CD8-positive, alpha-beta memory T cell (primary cell): ENCODE measurements at regions of chr4 and their contacts with region 1.

Region 1: DNA sequence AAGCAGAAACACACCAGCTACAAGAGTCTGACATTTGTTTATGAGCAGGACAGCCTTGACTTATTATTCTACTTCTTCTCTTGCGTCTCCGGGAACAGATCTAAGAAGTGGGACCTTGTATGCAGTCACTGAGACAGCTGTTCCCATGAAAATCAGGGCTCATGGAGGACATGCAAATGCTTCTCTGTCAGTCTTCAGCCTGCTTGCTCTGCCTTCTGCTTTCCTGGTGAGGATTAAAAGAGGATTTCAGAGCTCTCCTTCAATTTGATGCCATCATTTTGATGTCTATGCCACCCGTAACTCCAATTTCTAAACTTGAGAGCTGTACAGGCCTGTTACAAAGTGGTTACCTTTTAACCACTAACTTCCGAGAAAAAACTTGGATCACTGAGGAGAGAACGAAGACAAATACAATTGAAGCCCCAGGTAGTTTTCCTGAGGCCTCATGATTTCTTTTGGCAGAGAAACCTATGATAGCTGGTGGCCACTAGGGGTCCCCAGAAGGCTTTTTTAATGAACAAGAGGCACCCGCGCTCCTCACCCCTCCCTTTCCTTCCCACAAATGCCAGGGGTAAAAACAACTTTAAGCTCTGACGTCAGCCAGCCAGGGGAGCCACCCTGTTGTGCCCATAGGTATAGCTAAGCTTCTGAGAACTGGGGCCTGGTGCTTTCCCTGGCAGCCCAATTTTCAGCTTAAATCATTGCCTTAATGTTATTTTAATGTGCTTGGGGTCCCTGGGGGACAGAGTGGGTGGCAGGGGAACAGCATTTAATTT is 97.0 kb downstream of the DDIT4L start:
- DNase-seq: peak; percentile 74 to 93 (median 88)
- H3K4me3 ChIP-seq: no peak overlapping the region
- H3K4me3 Mint-ChIP-seq: peak overlapping the region in 4 of 7 donors; percentile 10 to 55 (median 27)
- H3K27ac ChIP-seq: no peak overlapping the region
- H3K27ac Mint-ChIP-seq: peak overlapping the region; percentile 57 to 96 (median 94)
- H3K4me1 ChIP-seq: peaks cover 10% of the 10 kb centered on the region
- H3K4me1 Mint-ChIP-seq: peaks cover 20 to 34% (median 23%) of the 10 kb centered on the region in 3 donors
- H3K27me3 ChIP-seq: no peaks in the 10 kb centered on the region
- H3K27me3 Mint-ChIP-seq: peaks cover 0 to 3% of the 10 kb centered on the region in 2 donors

Region 2: DNA sequence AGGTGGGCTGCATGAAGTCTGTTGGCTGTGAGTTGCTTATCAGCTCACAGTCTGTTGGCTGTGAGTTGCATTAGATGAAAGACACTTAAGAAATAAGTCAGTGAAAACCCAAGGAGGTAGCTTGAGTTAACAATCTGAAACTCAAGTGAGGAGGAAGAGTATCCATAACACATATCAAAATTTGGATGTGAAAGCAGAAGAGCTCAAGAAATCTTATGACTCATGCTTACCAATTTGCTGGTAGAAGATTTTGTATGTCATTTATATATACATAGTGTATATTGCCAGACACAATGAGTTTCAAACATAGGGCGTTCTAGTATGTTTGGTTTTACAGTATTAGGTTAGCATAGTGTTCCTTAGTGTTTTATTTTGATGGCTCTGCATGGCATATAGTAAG is 10.4 kb before region 1 on chr4:
- CTCF ChIA-PET with region 1: interaction called, 15 read pairs
- POLR2A ChIA-PET with region 1: no interaction called
- DNase-seq: no peak
- H3K4me3 ChIP-seq: no peak overlapping the region
- H3K4me3 Mint-ChIP-seq: no peak overlapping the region
- H3K27ac ChIP-seq: no peak overlapping the region
- H3K27ac Mint-ChIP-seq: no peak overlapping the region
- H3K4me1 ChIP-seq: no peaks in the 10 kb centered on the region
- H3K4me1 Mint-ChIP-seq: peaks cover 8 to 14% (median 10%) of the 10 kb centered on the region in 3 donors
- H3K27me3 ChIP-seq: no peaks in the 10 kb centered on the region
- H3K27me3 Mint-ChIP-seq: peaks cover 0 to 2% of the 10 kb centered on the region in 2 donors

Region 3: DNA sequence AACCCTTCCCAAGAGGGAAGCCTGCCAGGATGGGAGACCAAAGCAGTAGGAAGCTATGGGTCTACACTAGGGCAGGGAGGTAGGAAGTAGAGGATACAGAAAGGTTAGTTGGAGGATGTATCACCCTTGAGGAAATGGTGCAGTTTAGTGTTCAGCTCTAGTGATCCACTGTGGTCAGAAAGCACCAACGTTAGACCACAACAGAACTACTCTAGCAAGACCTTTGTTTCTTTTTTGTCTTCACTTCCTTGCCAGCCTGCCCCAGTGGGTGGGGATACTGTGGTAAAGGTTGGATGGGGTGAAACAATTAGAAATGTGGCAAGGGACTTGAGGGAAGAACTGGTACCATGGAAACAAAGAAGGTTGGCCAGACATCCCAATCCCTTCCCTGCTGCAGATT is 13.7 kb after region 1 on chr4:
- CTCF ChIA-PET with region 1: interaction called, 28 read pairs
- POLR2A ChIA-PET with region 1: no interaction called
- DNase-seq: peak in 3 of 5 donors; percentile 49 to 56 (median 54)
- H3K4me3 ChIP-seq: no peak overlapping the region
- H3K4me3 Mint-ChIP-seq: peak overlapping the region in 5 of 7 donors; percentile 2 to 74 (median 16)
- H3K27ac ChIP-seq: no peak overlapping the region
- H3K27ac Mint-ChIP-seq: peak overlapping the region in 7 of 8 donors; percentile 42 to 80 (median 67)
- H3K4me1 ChIP-seq: peaks cover 10% of the 10 kb centered on the region
- H3K4me1 Mint-ChIP-seq: peaks cover 15 to 27% (median 19%) of the 10 kb centered on the region in 3 donors
- H3K27me3 ChIP-seq: no peaks in the 10 kb centered on the region
- H3K27me3 Mint-ChIP-seq: no peaks in the 10 kb centered on the region

Region 4: GRCh38 chr4:100248476-100248875 is 155.2 kb after region 1 on chr4:
- CTCF ChIA-PET with region 1: no interaction called
- POLR2A ChIA-PET with region 1: no interaction called
- DNase-seq: no peak
- H3K4me3 ChIP-seq: no peak overlapping the region
- H3K4me3 Mint-ChIP-seq: no peak overlapping the region
- H3K27ac ChIP-seq: no peak overlapping the region
- H3K27ac Mint-ChIP-seq: no peak overlapping the region
- H3K4me1 ChIP-seq: no peaks in the 10 kb centered on the region
- H3K4me1 Mint-ChIP-seq: no peaks in the 10 kb centered on the region
- H3K27me3 ChIP-seq: no peaks in the 10 kb centered on the region
- H3K27me3 Mint-ChIP-seq: no peaks in the 10 kb centered on the region

Region 5: GRCh38 chr4:100261346-100261745 is 168.1 kb after region 1 on chr4:
- CTCF ChIA-PET with region 1: no interaction called
- POLR2A ChIA-PET with region 1: no interaction called
- DNase-seq: no peak
- H3K4me3 ChIP-seq: no peak overlapping the region
- H3K4me3 Mint-ChIP-seq: no peak overlapping the region
- H3K27ac ChIP-seq: no peak overlapping the region
- H3K27ac Mint-ChIP-seq: no peak overlapping the region
- H3K4me1 ChIP-seq: no peaks in the 10 kb centered on the region
- H3K4me1 Mint-ChIP-seq: no peaks in the 10 kb centered on the region
- H3K27me3 ChIP-seq: no peaks in the 10 kb centered on the region
- H3K27me3 Mint-ChIP-seq: peaks cover 3 to 9% of the 10 kb centered on the region in 2 donors

Region 6: DNA sequence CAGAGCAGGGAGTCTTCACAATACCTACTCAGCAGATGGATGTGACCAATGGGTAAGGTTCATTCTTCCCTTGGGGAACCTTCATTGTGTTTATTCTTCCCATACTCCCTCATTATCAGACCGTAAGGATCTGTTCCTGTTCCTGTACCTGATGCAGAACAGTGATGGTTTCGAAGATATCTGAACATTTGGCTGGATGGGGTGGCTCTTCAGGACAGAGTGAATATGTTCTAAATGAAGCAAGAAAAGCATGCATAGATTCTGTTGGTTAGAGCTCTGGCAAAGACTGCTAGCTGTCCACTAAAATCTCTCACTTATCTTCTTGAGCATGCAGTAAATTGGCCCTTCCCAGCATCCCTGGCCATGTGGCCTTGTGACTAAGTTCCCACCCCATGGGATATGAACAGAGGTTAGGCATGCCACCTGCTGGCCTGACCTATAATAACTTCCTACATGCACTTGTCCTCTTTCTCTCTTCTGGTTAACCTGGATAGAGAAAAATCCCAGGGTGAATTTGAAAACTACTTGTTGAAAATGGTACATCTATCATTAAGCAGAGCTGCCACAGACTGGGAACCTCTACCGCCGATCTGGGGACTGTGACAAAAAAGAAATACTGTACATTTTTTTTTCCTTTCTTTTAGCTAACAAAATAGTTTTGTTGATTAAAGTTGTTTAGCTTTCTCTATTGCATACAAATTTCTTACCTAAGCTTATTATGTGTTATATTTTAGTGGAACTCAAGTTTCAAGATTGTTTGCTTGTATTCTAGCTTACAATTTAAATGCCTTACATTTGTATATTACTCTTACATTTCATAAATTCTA is 1637.2 kb after region 1 on chr4:
- CTCF ChIA-PET with region 1: interaction called, 12 read pairs
- POLR2A ChIA-PET with region 1: no interaction called
- DNase-seq: peak in 4 of 5 donors; percentile 14 to 53 (median 26)
- H3K4me3 ChIP-seq: no peak overlapping the region
- H3K4me3 Mint-ChIP-seq: no peak overlapping the region
- H3K27ac ChIP-seq: no peak overlapping the region
- H3K27ac Mint-ChIP-seq: peak overlapping the region in 1 of 8 donors; percentile 70
- H3K4me1 ChIP-seq: no peaks in the 10 kb centered on the region
- H3K4me1 Mint-ChIP-seq: no peaks in the 10 kb centered on the region
- H3K27me3 ChIP-seq: no peaks in the 10 kb centered on the region
- H3K27me3 Mint-ChIP-seq: peaks cover 0 to 18% of the 10 kb centered on the region in 2 donors